Activated CD4-positive, alpha-beta T cell treated with anti-CD3 and anti-CD28 coated beads for 36 hours (primary cell): ENCODE measurements at regions of chr3 and their contacts with region 1.

Region 1: DNA sequence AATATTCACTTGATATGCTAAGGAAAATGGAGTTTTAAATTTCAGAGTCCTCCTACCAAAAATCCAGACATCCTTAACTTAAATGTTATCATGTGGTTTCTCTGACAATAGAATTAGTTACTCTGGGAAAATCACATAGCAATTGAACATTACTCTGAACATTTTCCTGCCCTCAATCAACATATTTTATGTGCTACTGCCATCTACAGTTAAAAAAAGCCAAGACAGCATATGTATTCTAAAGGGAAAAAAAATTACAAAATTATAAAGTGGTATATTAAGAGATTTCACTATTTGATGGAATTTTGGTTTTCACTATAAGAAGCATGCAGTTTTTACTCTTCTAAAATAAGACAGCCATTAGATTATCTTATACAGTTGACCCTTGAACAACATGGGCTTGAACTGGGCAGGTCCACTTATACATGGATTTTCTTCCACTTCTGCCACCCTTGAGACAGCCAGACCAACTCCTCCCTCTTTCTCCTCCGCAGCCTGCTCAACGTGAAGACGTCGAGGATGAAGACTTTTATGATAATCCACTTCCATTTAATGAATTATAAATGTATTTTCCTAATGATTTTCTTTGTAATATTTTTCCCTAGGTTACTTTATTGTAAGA is 122.3 kb downstream of the ATP1B3 start:
- DNase-seq: no peak
- ATAC-seq: no peak
- H3K4me3 Mint-ChIP-seq: no peak overlapping the region
- H3K27ac Mint-ChIP-seq: no peak overlapping the region
- H3K4me1 Mint-ChIP-seq: no peaks in the 10 kb centered on the region
- H3K27me3 Mint-ChIP-seq: no peaks in the 10 kb centered on the region

Region 2: DNA sequence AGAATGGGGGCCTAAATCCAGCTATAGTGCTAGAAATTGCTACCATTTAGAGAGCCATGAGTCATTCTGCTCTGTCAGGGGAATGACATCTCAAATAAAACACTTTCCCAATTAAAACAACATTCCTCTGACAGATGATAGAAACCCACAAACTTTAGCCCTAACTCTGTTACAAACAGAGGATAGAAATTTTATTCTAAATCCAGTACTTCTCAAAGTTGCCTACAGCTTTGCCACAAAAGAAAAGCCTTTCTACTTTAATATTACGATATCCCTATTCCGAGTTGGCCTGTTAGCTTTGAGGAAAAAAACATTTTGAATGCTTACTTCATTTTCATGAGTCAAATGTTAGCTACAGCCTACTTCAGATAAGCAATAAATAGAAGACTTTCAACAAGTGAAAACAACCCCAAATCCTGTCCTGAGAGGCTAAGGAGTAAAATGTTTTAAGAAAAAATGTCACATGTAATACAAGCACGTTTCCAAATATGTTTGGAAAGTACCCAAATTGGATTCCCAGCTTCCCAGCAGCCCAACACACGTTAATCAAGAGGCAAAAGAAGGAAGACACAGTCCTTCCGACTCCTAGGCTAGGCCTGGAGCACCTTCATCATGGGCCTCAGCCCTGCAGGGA is 38.7 kb before region 1 on chr3:
- CTCF ChIA-PET with region 1: interaction called, 4 read pairs
- POLR2A ChIA-PET with region 1: no interaction called
- intact Hi-C with region 1: loop called in 1 of 2 experiments (anchors 2 kb)
- DNase-seq: no peak
- ATAC-seq: no peak
- H3K4me3 Mint-ChIP-seq: no peak overlapping the region
- H3K27ac Mint-ChIP-seq: no peak overlapping the region
- H3K4me1 Mint-ChIP-seq: peaks cover 3% of the 10 kb centered on the region
- H3K27me3 Mint-ChIP-seq: no peaks in the 10 kb centered on the region